ENCODE measurements at regions of chr15 and their contacts with region 1.

Region 1: GRCh38 chr15:74025436-74025835 is 30.9 kb downstream of the PML start:
- DNase-seq: peak; percentile 70
- H3K4me3 ChIP-seq: no peak overlapping the region
- H3K27ac ChIP-seq: peak overlapping the region; percentile 62
- H3K4me1 ChIP-seq: peaks cover 22% of the 10 kb centered on the region
- H3K27me3 ChIP-seq: no peaks in the 10 kb centered on the region
- CTCF ChIP-seq: no peak
- POLR2A ChIP-seq: no peak

Region 2: DNA sequence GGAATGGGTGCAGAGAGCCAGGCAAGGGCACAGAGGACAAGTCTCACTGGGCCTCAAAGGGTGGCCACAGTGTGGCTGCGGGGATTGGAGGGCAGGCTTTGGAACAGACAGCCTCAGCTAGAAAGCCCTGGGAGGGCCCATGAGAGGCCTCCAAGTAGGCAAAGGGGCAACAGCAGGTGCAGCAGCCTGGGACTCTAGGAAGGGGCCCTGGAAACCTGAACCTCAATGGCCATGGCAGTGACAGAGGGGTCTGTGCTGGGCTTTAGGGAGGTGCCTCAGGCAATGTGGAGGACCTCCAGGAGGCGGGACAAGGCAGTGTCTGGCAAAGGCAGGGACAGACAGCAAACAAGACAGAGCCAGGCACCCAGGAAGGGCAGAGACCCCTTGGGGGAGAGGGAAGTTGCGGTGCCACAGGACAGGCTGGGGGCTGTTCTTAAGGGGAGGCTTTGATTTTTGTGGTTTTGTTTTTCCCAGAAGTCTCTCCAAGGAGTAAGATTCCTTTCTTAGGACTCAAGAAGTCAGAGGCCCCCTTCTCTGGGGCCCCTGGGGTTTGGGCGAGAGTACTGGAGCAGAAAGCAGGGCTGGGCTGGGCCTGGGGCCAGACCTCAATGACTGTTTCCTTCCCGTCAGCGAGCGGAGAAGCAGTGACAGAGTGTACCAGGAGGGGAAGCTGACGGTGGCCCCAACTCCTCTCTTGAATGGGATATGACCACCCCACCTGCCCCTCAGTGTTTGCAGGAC is 43.0 kb before region 1 on chr15:
- CTCF ChIA-PET with region 1: no interaction called
- POLR2A ChIA-PET with region 1: no interaction called
- dilution Hi-C with region 1: no loop called
- intact Hi-C with region 1: loop called (anchors 1 kb)
- DNase-seq: peak; percentile 53
- H3K4me3 ChIP-seq: no peak overlapping the region
- H3K27ac ChIP-seq: peak overlapping the region; percentile 70
- H3K4me1 ChIP-seq: peaks cover 27% of the 10 kb centered on the region
- H3K27me3 ChIP-seq: no peaks in the 10 kb centered on the region
- CTCF ChIP-seq: no peak
- POLR2A ChIP-seq: peak; percentile 20

Region 3: DNA sequence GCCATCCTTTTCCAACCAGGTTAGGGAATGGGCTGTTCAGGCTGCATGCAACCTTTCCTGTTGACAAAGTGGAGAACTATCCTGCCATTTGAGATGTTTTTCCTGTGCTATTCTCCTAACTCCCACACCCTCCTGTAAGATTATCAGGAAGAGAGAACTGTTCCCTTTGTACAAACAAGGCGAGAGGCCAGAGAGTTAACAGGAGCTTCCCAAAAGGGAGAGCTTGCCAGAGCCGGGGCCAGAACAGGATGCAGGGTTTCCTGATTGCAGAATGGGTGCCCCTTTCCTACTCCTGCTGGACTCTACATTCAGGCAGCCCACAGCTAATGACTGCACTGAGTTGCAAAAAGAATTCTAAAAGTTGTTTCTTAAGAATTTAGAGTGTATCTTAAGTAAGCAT is 13.8 kb before region 1 on chr15:
- CTCF ChIA-PET with region 1: interaction called, 8 read pairs
- POLR2A ChIA-PET with region 1: no interaction called
- dilution Hi-C with region 1: no loop called
- intact Hi-C with region 1: loop called (anchors 1 kb)
- DNase-seq: peak; percentile 92
- H3K4me3 ChIP-seq: peak overlapping the region in 1 of 3 experiments; percentile 56
- H3K27ac ChIP-seq: peak overlapping the region; percentile 47
- H3K4me1 ChIP-seq: peaks cover 51% of the 10 kb centered on the region
- H3K27me3 ChIP-seq: no peaks in the 10 kb centered on the region
- CTCF ChIP-seq: no peak
- POLR2A ChIP-seq: peak; percentile 40

Region 4: DNA sequence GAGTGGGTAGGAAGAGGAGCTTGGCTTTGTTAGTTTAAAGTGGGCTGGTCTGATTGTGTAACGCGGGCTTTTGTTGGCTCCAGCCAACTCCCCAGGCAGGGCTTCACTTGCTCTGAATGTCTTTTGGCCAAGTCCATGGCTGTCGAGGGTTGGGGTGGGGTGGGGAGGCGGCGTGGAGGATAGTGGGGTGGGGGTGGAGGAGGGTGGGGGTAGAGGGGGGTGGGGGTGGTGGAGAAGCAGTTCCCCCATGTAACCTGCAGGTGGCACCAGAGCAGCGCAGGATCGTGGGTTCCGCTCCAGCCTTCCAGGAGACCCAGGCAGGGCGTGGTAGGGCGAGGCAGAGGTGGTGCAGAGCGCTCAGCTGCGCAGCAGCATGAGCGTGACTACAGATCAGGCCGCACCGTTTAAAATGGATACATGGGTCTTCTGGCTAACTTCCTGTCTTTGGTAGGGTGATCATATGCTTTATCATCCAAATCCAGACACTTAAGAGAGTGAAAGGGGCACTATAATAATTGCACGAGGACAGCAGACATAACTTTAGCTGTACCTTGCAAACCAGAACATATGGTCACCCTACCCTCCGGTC is 28.6 kb after region 1 on chr15:
- CTCF ChIA-PET with region 1: interaction called, 11 read pairs
- POLR2A ChIA-PET with region 1: no interaction called
- dilution Hi-C with region 1: no loop called
- intact Hi-C with region 1: no loop called
- DNase-seq: peak; percentile 41
- H3K4me3 ChIP-seq: no peak overlapping the region
- H3K27ac ChIP-seq: no peak overlapping the region
- H3K4me1 ChIP-seq: no peaks in the 10 kb centered on the region
- H3K27me3 ChIP-seq: peaks cover 3 to 12% of the 10 kb centered on the region in 2 experiments
- CTCF ChIP-seq: peak; percentile 19 to 77
- POLR2A ChIP-seq: no peak

Region 5: GRCh38 chr15:74565381-74566085 is 540.1 kb after region 1 on chr15:
- CTCF ChIA-PET with region 1: no interaction called
- POLR2A ChIA-PET with region 1: no interaction called
- dilution Hi-C with region 1: no loop called
- intact Hi-C with region 1: no loop called
- DNase-seq: no peak
- H3K4me3 ChIP-seq: no peak overlapping the region
- H3K27ac ChIP-seq: no peak overlapping the region
- H3K4me1 ChIP-seq: no peaks in the 10 kb centered on the region
- H3K27me3 ChIP-seq: no peaks in the 10 kb centered on the region
- CTCF ChIP-seq: no peak
- POLR2A ChIP-seq: no peak